Activated B cell treated with CpG ODN at 0.5 μM for 24 hours (primary cell): ENCODE measurements at regions of chr22 and their contacts with region 1.

Region 1: GRCh38 chr22:39110631-39111561 is 13.9 kb downstream of the APOBEC3H start:
- DNase-seq: no peak
- ATAC-seq: peak; percentile 55
- H3K4me3 Mint-ChIP-seq: no peak overlapping the region
- H3K27ac Mint-ChIP-seq: peak overlapping the region; percentile 37
- H3K4me1 Mint-ChIP-seq: peaks cover 48% of the 10 kb centered on the region
- H3K27me3 Mint-ChIP-seq: no peaks in the 10 kb centered on the region
- CTCF ChIP-seq: no peak

Region 2: DNA sequence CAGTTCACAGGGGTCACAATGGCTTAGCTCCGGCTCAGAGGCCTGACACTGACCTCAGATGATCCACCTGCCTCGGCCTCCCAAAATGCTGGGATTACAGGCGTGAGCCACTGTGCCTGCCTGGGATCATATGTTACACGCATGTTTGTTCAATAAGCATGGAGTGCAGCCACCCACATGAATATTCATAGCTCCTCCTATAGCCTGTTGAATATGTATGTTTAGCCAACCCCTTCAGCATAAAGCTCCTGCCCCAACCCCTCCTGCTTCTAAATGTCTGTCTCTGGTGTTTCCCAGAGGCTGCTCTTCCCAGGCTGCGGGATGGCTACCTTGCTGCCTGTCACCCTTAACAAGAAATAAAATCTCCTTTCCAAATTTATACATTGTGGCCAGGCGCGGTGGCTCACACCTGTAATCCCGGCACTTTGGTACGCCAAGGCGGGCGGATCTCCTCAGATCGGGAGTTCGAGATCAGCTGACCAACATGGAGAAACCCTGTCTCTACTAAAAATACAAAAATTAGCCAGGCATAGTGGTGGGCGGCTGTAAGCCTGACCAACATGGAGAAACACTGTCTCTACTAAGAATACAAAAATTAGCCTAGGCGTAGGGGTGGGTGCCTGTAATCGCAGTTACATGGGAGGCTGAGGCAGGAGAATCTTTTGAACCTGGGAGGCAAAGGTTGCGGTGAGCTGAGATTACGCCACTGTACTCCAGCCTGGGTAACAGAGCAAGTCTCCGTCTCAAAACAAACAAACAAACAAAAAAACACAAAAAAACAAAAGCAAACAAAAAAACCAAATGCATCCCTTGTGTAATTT is 71.4 kb before region 1 on chr22:
- CTCF ChIA-PET with region 1: no interaction called
- POLR2A ChIA-PET with region 1: interaction called, 10 read pairs
- intact Hi-C with region 1: no loop called
- DNase-seq: no peak
- ATAC-seq: no peak
- H3K4me3 Mint-ChIP-seq: peak overlapping the region; percentile 90
- H3K27ac Mint-ChIP-seq: peak overlapping the region; percentile 83
- H3K4me1 Mint-ChIP-seq: peaks cover 43% of the 10 kb centered on the region
- H3K27me3 Mint-ChIP-seq: no peaks in the 10 kb centered on the region
- CTCF ChIP-seq: no peak

Region 3: DNA sequence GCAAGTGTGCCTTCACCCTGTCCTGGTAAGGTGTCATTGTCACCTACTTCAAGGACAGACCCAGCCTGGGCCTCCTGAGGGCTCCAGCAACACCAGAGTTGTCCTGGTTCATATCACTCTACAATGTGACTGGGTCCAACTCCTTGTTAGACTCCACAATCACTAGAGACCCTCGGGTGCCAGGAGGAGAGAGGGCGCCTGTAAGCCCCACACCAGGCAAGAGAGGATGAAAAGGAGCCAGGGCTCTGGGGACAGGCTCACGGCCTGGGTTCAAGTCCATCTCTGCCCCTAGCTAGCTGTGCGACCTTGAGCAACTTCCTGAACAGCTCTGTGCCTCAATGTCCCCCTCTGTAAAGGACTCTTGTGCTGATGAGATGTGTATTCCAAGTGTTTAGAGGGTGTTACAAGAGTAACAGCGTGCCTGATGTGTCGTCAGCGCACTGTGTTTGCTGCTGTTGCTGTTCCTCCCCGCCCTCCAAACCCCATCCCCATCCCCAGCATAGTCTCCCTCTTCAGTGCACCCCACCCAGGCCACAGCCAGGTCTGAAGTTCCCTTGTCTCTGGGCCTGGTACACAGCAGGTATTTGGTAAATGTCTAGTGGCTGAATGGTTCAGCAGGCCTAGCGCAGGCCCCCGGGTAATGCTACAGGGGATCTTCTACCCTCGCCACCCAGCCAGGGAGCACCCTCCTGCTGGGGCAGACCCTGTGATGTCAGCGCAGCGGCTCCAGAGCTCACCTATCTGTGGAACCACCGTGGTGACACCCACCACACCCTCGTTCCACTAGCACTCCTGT is 31.1 kb after region 1 on chr22:
- CTCF ChIA-PET with region 1: no interaction called
- POLR2A ChIA-PET with region 1: no interaction called
- intact Hi-C with region 1: no loop called
- DNase-seq: no peak
- ATAC-seq: no peak
- H3K4me3 Mint-ChIP-seq: no peak overlapping the region
- H3K27ac Mint-ChIP-seq: no peak overlapping the region
- H3K4me1 Mint-ChIP-seq: peaks cover 22% of the 10 kb centered on the region
- H3K27me3 Mint-ChIP-seq: no peaks in the 10 kb centered on the region
- CTCF ChIP-seq: no peak

Region 4: DNA sequence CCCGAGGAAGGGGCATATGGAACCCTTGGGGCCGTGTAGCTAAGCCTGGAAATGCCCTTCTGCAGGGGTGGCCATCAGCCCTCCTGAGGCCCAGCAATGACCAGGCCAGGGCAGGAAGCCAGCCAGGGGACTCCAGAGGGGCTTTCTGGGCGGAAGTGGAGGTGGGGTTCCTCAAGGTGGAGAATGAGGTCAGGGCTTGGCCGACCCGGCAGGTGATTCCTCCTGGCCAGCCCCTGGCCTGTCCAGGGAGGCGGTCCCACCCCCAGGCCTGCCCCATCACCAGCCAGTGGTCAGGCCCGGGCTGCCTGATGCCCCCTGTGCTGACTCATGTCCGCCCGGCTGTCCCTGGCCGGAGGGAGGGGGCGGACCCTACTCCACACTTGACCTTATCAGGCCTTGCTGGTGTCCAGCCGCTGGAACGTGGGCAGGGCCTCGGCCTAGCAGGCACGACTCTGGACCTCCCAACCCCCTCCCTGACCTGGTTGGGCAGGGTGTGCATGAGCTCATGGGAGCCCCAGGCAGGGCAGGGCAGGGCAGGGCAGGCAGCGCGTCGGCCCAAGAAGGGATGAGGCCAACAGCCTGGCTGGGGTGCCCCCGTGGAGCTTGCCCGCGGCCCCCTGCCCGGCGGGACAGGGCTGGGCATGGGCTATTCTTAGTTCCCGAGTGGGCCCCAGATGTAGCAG is 172.6 kb after region 1 on chr22:
- CTCF ChIA-PET with region 1: no interaction called
- POLR2A ChIA-PET with region 1: no interaction called
- intact Hi-C with region 1: no loop called
- DNase-seq: no peak
- ATAC-seq: no peak
- H3K4me3 Mint-ChIP-seq: no peak overlapping the region
- H3K27ac Mint-ChIP-seq: no peak overlapping the region
- H3K4me1 Mint-ChIP-seq: peaks cover 15% of the 10 kb centered on the region
- H3K27me3 Mint-ChIP-seq: peaks cover 16% of the 10 kb centered on the region
- CTCF ChIP-seq: no peak